ENCODE measurements at regions of chr7 and their contacts with region 1.

Region 1: DNA sequence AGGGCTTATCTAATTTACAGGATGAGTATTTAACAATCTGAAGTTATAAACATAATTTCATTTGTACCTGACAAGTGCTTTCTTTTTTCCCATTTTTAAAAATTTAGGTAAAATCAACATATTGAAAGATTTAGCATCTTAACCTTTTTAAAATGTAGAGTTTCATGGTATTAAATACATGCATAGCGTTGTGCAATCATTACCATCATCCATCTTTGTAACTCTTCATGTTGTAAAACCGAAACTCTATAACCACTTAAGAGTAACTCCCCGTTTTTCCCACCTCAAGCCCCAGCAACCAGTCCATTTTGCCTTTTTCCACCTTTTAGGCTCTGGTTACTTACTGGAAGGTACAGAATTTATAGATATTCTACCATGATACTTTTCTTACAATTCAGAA is 892.5 kb downstream of the DNAJB9 start:
- DNase-seq: no peak

Region 2: GRCh38 chr7:109318136-109318535 is 144.0 kb before region 1 on chr7:
- intact Hi-C with region 1: no loop called
- DNase-seq: no peak

Region 3: DNA sequence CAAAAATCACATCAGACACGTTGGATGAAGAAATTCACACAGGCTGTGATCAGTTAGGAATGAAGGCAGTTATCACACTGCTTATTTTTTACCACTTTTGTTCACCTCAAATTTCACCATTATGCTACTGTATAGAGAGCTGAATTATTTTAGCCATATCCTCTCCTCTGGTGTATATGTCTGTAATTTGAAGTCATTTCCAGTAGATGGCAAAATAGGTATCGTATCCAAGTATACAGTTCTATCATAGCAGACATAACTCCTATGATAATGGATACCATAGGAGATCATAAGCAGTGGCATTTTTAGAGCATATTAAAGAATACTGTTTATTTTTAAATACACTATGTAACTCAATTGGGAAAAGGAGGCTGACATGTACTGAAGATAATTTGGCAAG is 17.2 kb after region 1 on chr7:
- intact Hi-C with region 1: loop called in 1 of 2 experiments (anchors 2 kb)
- DNase-seq: no peak